ENCODE measurements at regions of chr1 and their contacts with region 1.

Region 1: GRCh38 chr1:207004981-207005830 is 27.4 kb downstream of the C1orf116 start:
- H3K4me3 ChIP-seq: no peak overlapping the region
- H3K27ac ChIP-seq: no peak overlapping the region
- H3K4me1 ChIP-seq: no peaks in the 10 kb centered on the region
- CTCF ChIP-seq: peak; percentile 77

Region 2: DNA sequence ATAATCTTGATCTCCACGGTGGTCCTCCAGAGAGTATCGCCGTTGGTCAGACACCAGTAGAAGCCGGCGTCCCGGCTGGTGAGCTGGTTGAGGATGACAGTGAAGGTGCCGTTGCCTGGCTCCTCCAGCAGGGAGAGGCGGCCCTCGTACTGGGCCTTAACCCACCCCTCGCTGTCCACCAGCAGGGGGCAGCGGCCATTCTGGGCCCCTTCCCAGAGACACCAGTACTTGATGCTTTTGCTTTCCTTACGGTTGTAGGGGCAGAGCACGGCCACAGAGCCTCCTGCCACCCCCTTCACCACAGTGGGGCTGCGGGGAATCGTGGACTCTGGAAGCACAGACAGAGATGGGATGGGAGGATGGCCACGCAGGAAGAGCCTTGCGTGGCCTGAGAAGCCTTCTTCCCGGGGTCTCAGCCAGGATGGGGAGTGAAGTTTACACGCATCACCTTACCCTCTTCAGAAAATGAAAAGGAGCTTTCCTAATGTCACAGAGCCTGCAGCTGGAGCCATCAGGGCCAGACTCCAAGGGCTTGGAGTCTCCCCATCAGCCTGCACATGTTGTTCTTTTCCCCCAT is 69.6 kb before region 1 on chr1:
- CTCF ChIA-PET with region 1: interaction called, 12 read pairs
- POLR2A ChIA-PET with region 1: no interaction called
- H3K4me3 ChIP-seq: no peak overlapping the region
- H3K27ac ChIP-seq: no peak overlapping the region
- H3K4me1 ChIP-seq: no peaks in the 10 kb centered on the region
- CTCF ChIP-seq: peak; percentile 51; the same call in 1 of the 2 replicates

Region 3: GRCh38 chr1:206965781-206966180 is 39.4 kb before region 1 on chr1:
- CTCF ChIA-PET with region 1: no interaction called
- POLR2A ChIA-PET with region 1: no interaction called
- H3K4me3 ChIP-seq: no peak overlapping the region
- H3K27ac ChIP-seq: no peak overlapping the region
- H3K4me1 ChIP-seq: no peaks in the 10 kb centered on the region
- CTCF ChIP-seq: no peak

Region 4: GRCh38 chr1:207015791-207016190 is 10.6 kb after region 1 on chr1:
- CTCF ChIA-PET with region 1: interaction called, 16 read pairs
- POLR2A ChIA-PET with region 1: no interaction called
- H3K4me3 ChIP-seq: no peak overlapping the region
- H3K27ac ChIP-seq: no peak overlapping the region
- H3K4me1 ChIP-seq: no peaks in the 10 kb centered on the region
- CTCF ChIP-seq: no peak

Region 5: DNA sequence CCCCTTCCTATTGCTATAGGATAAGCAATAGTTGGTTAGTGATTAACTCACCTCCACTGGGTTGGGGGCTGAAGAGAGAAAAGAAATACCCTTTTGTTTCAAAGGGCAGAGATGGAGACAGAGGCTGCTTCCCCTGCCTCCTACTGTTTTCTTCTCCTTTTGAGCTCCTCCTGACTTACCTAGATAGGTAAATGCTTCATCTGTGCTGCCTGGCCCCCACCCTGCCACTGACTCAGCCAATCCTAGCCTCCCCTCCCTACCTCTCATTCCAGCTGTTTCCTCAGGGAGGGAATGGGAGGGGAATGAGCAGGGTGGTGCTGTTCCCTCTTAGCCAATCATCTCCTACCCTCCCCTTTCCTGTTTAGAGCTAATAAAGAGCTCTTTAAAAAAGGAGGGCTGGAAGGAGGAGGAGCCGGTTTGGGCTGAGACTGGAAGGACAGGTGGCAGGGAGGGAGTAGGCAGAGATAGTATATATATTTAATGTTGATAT is 27.4 kb after region 1 on chr1 and contains the start of gene C1orf116:
- CTCF ChIA-PET with region 1: interaction called, 16 read pairs
- POLR2A ChIA-PET with region 1: no interaction called
- H3K4me3 ChIP-seq: no peak within 1 kb of the TSS
- H3K27ac ChIP-seq: no peak within 1 kb of the TSS
- H3K4me1 ChIP-seq: no peaks in the 10 kb centered on the region
- CTCF ChIP-seq: no peak

Measured in HEK293 (cell line).